ENCODE measurements at regions of chr2 and their contacts with region 1.

Region 1: DNA sequence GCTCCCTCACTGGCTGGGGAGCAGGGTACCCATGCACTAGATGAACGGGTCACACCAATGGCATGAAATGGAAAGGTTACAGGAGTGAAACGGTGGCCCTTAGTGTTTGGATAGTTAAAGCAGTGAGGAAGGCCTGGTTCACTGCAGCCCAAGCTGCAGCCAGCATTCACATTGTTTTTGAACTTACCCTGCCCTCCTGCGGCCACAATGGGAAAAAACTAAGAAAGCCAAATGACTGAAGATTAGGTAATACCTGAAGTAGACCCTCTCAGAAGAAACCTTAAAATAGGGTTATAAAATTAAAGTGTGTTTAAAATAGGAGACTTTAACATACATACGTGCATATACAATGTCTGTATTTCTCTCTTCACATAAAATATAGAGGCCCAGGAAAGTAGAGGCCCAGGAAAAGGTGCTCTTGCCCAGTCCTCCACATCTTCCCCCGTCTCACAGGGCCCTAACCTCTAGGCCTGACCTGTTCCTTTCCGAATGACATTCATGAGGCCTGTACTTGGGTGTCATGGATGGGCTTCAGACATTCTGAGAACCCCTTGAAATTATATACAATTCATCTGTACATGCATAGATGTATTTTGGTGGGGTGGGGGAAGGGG is 33.3 kb downstream of the DOK1 start:
- DNase-seq: peak; percentile 70
- H3K4me3 Mint-ChIP-seq: no peak overlapping the region
- H3K27ac Mint-ChIP-seq: no peak overlapping the region
- H3K4me1 Mint-ChIP-seq: peaks cover 30% of the 10 kb centered on the region
- H3K27me3 Mint-ChIP-seq: peaks cover 28% of the 10 kb centered on the region

Region 2: GRCh38 chr2:74037379-74037860 is 550.4 kb before region 1 on chr2:
- CTCF ChIA-PET with region 1: no interaction called
- POLR2A ChIA-PET with region 1: no interaction called
- DNase-seq: no peak
- H3K4me3 Mint-ChIP-seq: no peak overlapping the region
- H3K27ac Mint-ChIP-seq: no peak overlapping the region
- H3K4me1 Mint-ChIP-seq: peaks cover 63% of the 10 kb centered on the region
- H3K27me3 Mint-ChIP-seq: no peaks in the 10 kb centered on the region

Region 3: DNA sequence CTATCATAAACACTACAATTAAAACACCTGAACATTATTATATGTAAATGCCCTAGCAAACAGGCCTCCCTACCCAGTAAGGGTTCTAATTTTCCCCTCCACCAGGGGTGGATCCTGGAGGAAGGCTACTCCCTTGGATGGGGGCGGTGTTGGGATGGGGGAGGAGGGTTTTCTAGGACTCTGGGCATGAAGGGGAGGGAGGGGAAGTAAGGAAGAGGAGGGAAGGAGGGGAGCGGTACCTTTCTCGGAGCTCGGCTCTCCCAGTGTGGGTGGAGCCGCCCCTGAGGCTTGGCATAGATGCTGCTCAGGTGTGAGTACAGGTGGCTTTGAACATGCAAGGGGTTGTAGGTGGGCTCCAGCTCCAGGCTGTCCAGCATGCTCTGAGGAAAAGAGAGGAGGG is 27.9 kb before region 1 on chr2:
- CTCF ChIA-PET with region 1: interaction called, 12 read pairs
- POLR2A ChIA-PET with region 1: no interaction called
- DNase-seq: no peak
- H3K4me3 Mint-ChIP-seq: no peak overlapping the region
- H3K27ac Mint-ChIP-seq: no peak overlapping the region
- H3K4me1 Mint-ChIP-seq: peaks cover 17% of the 10 kb centered on the region
- H3K27me3 Mint-ChIP-seq: peaks cover 16% of the 10 kb centered on the region

Region 4: GRCh38 chr2:74573747-74574562 is 13.8 kb before region 1 on chr2:
- CTCF ChIA-PET with region 1: interaction called, 56 read pairs
- POLR2A ChIA-PET with region 1: no interaction called
- DNase-seq: peak; percentile 56
- H3K4me3 Mint-ChIP-seq: peak overlapping the region; percentile 28
- H3K27ac Mint-ChIP-seq: peak overlapping the region; percentile 67
- H3K4me1 Mint-ChIP-seq: peaks cover 33% of the 10 kb centered on the region
- H3K27me3 Mint-ChIP-seq: no peaks in the 10 kb centered on the region

Region 5: GRCh38 chr2:74602586-74603281 is 15.0 kb after region 1 on chr2:
- CTCF ChIA-PET with region 1: interaction called, 45 read pairs
- POLR2A ChIA-PET with region 1: no interaction called
- DNase-seq: no peak
- H3K4me3 Mint-ChIP-seq: no peak overlapping the region
- H3K27ac Mint-ChIP-seq: no peak overlapping the region
- H3K4me1 Mint-ChIP-seq: peaks cover 17% of the 10 kb centered on the region
- H3K27me3 Mint-ChIP-seq: peaks cover 42% of the 10 kb centered on the region